CD8-positive, alpha-beta T cell (primary cell): ENCODE measurements at regions of chr1 and their contacts with region 1.

Region 1: DNA sequence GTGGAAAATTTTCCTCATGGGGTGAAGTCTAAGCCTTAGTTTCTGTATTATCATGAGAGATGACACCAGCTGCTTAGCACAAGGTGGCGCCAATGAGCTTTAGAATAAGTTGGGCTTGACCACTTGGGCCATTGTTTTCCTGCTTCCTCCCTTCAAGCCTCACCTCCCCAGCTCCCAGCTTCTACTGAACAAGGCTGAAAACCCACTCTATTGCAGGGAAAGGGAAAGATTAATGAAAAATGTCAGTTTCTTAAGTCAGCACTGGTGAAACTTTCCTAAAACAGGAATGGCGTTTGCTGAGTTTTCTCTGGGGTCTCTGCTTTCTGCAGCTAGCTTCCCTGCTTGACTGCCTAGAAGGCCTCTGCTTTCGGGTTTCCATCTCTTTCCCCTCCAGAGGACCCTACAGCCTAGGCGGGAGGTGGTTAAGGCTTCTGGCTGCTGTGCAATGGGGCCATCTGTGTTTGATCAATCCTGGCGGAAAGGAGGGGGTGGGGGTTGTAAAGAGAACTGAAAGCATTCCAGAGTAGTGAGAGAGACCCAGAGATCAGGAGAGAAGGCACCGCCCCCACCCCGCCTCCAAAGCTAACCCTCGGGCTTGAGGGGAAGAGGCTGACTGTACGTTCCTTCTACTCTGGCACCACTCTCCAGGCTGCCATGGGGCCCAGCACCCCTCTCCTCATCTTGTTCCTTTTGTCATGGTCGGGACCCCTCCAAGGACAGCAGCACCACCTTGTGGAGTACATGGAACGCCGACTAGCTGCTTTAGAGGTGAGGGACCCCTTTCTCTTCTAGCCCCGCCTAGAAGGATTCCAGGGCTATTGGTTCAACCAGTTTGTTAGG is at the start of gene OLFML3:
- DNase-seq: peak in 6 of 9 experiments; percentile 8 to 70 (median 48)
- ATAC-seq: peak; percentile 26
- H3K4me3 ChIP-seq: no peak within 1 kb of the TSS
- H3K4me3 Mint-ChIP-seq: no peak within 1 kb of the TSS
- H3K27ac ChIP-seq: no peak within 1 kb of the TSS
- H3K27ac Mint-ChIP-seq: peak within 1 kb of the TSS; percentile 55
- H3K4me1 ChIP-seq: peaks cover 18% of the 10 kb centered on the region
- H3K4me1 Mint-ChIP-seq: peaks cover 41% of the 10 kb centered on the region
- H3K27me3 ChIP-seq: no peaks in the 10 kb centered on the region
- H3K27me3 Mint-ChIP-seq: no peaks in the 10 kb centered on the region
- CTCF ChIP-seq: peak; percentile 56
- total RNA-seq, gene OLFML3: 0.49 to 0.67 TPM

Region 2: DNA sequence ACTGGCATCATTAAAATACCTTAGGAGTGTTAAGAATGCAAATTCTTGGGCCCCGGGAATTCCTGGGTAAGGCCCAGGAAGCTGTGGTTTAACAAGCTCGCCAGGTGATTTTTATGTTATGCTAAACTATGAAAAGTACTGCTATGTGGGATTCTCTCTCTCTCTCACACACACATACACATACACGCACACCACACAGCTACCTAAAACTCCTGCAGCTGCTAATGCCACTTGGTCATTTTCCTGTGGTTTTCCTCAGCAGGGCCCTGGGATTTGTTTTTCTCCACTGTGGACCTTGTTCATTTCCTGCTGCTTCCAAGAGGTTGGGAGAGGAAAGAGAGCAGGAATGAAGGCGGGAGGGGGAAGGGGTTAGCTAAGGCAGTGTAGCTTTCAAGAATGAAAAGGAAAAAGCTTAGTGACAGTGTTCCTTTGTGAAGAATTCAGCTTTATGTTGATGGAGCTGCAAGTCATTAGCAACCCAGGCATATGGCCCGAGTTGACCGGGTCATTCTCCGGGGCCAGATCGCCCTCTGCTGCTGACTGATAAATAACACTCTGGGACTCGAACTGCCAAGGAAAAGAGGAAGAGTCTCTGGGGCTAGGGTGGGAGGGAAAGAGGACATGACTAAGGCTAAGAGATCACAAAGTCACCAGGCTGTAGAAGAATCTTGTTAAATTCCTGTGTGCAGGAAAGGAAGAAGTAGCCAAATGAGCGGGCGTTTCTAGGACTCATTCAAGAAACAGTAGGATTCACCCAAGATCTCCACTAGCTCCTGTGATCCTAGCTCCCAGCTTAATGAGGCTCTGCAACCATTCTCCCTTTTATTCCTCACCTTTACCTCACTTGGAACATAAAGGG is 936.6 kb before region 1 on chr1:
- CTCF ChIA-PET with region 1: no interaction called
- POLR2A ChIA-PET with region 1: no interaction called
- intact Hi-C with region 1: no loop called
- DNase-seq: peak in 3 of 9 experiments; percentile 7 to 41 (median 29)
- ATAC-seq: no peak
- H3K4me3 ChIP-seq: no peak overlapping the region
- H3K4me3 Mint-ChIP-seq: no peak overlapping the region
- H3K27ac ChIP-seq: no peak overlapping the region
- H3K27ac Mint-ChIP-seq: peak overlapping the region; percentile 33
- H3K4me1 ChIP-seq: peaks cover 25% of the 10 kb centered on the region
- H3K4me1 Mint-ChIP-seq: peaks cover 31% of the 10 kb centered on the region
- H3K27me3 ChIP-seq: no peaks in the 10 kb centered on the region
- H3K27me3 Mint-ChIP-seq: no peaks in the 10 kb centered on the region
- CTCF ChIP-seq: no peak

Region 3: GRCh38 chr1:113835642-113836307 is 143.3 kb before region 1 on chr1:
- CTCF ChIA-PET with region 1: interaction called, 7 read pairs
- POLR2A ChIA-PET with region 1: no interaction called
- intact Hi-C with region 1: loop called in 1 of 2 experiments (anchors 2 kb)
- DNase-seq: peak in 4 of 9 experiments; percentile 17 to 77 (median 54)
- ATAC-seq: no peak
- H3K4me3 ChIP-seq: no peak overlapping the region
- H3K4me3 Mint-ChIP-seq: no peak overlapping the region
- H3K27ac ChIP-seq: no peak overlapping the region
- H3K27ac Mint-ChIP-seq: no peak overlapping the region
- H3K4me1 ChIP-seq: no peaks in the 10 kb centered on the region
- H3K4me1 Mint-ChIP-seq: peaks cover 7% of the 10 kb centered on the region
- H3K27me3 ChIP-seq: no peaks in the 10 kb centered on the region
- H3K27me3 Mint-ChIP-seq: no peaks in the 10 kb centered on the region
- CTCF ChIP-seq: peak; percentile 86

Region 4: GRCh38 chr1:113940365-113941244 is 38.5 kb before region 1 on chr1:
- CTCF ChIA-PET with region 1: interaction called, 5 read pairs
- POLR2A ChIA-PET with region 1: no interaction called
- intact Hi-C with region 1: loop called in 1 of 2 experiments (anchors 5 kb)
- DNase-seq: peak; percentile 10 to 86 (median 54)
- ATAC-seq: peak; percentile 60
- H3K4me3 ChIP-seq: peak overlapping the region; percentile 15 to 16
- H3K4me3 Mint-ChIP-seq: peak overlapping the region; percentile 78
- H3K27ac ChIP-seq: peak overlapping the region; percentile 31 to 71
- H3K27ac Mint-ChIP-seq: peak overlapping the region; percentile 91
- H3K4me1 ChIP-seq: peaks cover 77% of the 10 kb centered on the region
- H3K4me1 Mint-ChIP-seq: peaks cover 78% of the 10 kb centered on the region
- H3K27me3 ChIP-seq: no peaks in the 10 kb centered on the region
- H3K27me3 Mint-ChIP-seq: no peaks in the 10 kb centered on the region
- CTCF ChIP-seq: no peak

Region 5: DNA sequence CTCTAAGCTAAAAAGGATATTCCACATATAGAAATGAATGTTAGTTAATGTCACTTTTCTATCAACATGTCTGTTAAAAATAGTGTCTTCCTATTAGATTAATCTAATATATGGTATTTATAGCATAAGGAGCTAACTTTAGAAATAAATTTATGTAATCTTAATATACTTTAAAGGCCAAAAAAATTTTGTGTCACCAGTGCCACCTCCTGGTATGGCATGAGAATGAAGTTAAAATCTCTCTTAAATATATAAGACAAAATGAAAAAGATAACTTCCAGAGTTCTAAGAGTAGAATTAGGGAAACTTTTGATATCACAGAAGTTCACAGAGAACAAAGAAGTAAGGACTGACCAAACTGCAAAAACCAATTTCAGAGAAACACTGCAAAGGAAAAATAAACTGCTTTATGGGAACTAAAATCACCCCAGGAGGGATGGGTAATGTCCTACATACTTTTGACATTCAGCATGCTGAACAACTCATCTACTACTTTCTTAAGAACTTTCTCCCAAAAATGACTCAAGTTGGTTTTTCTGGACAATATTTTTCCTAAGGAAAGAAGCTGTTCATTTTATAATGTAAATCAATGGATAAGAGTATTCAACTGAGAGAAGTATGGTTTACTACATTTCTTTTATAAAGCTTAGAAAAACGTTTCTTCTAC is 449.1 kb after region 1 on chr1:
- CTCF ChIA-PET with region 1: interaction called, 6 read pairs
- POLR2A ChIA-PET with region 1: no interaction called
- intact Hi-C with region 1: loop called (anchors 1 to 5 kb)
- DNase-seq: peak in 3 of 9 experiments; percentile 17 to 54 (median 46)
- ATAC-seq: no peak
- H3K4me3 ChIP-seq: no peak overlapping the region
- H3K4me3 Mint-ChIP-seq: no peak overlapping the region
- H3K27ac ChIP-seq: no peak overlapping the region
- H3K27ac Mint-ChIP-seq: no peak overlapping the region
- H3K4me1 ChIP-seq: no peaks in the 10 kb centered on the region
- H3K4me1 Mint-ChIP-seq: peaks cover 2% of the 10 kb centered on the region
- H3K27me3 ChIP-seq: no peaks in the 10 kb centered on the region
- H3K27me3 Mint-ChIP-seq: no peaks in the 10 kb centered on the region
- CTCF ChIP-seq: peak; percentile 73

Region 6: DNA sequence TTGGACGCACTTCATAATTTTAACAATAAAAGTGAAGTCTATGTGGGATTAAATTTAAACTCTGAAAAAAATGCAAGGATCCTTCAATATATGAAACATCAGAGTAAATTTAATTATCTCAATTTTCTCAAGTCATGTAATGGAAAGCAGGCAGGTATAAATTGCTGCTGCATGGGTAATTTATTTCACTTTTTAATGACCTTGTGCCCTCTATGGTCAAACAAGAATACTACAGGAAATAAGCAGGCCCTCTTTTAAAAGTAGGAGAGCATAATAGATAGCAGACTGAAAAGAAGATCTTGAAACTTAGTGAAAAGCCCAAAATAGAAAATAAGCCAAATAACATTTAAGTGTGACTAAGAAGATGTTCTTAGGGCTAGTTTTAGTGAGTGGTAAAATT is 579.5 kb after region 1 on chr1:
- CTCF ChIA-PET with region 1: no interaction called
- POLR2A ChIA-PET with region 1: no interaction called
- intact Hi-C with region 1: loop called (anchors 2 kb)
- DNase-seq: peak in 2 of 9 experiments; percentile 26 to 48
- ATAC-seq: no peak
- H3K4me3 ChIP-seq: no peak overlapping the region
- H3K4me3 Mint-ChIP-seq: no peak overlapping the region
- H3K27ac ChIP-seq: no peak overlapping the region
- H3K27ac Mint-ChIP-seq: no peak overlapping the region
- H3K4me1 ChIP-seq: no peaks in the 10 kb centered on the region
- H3K4me1 Mint-ChIP-seq: no peaks in the 10 kb centered on the region
- H3K27me3 ChIP-seq: no peaks in the 10 kb centered on the region
- H3K27me3 Mint-ChIP-seq: no peaks in the 10 kb centered on the region
- CTCF ChIP-seq: peak; percentile 48

Region 7: GRCh38 chr1:114670083-114671010 is 691.3 kb after region 1 on chr1:
- CTCF ChIA-PET with region 1: no interaction called
- POLR2A ChIA-PET with region 1: no interaction called
- intact Hi-C with region 1: loop called (anchors 5 kb)
- DNase-seq: peak in 8 of 9 experiments; percentile 2 to 90 (median 86)
- ATAC-seq: peak; percentile 96
- H3K4me3 ChIP-seq: peak overlapping the region; percentile 77 to 79
- H3K4me3 Mint-ChIP-seq: peak overlapping the region; percentile 98
- H3K27ac ChIP-seq: peak overlapping the region in 1 of 2 experiments; percentile 49
- H3K27ac Mint-ChIP-seq: peak overlapping the region; percentile 92
- H3K4me1 ChIP-seq: peaks cover 5% of the 10 kb centered on the region
- H3K4me1 Mint-ChIP-seq: peaks cover 14% of the 10 kb centered on the region
- H3K27me3 ChIP-seq: no peaks in the 10 kb centered on the region
- H3K27me3 Mint-ChIP-seq: peaks cover 11% of the 10 kb centered on the region
- CTCF ChIP-seq: no peak